ENCODE measurements at regions of chr7 and their contacts with region 1.

Region 1: DNA sequence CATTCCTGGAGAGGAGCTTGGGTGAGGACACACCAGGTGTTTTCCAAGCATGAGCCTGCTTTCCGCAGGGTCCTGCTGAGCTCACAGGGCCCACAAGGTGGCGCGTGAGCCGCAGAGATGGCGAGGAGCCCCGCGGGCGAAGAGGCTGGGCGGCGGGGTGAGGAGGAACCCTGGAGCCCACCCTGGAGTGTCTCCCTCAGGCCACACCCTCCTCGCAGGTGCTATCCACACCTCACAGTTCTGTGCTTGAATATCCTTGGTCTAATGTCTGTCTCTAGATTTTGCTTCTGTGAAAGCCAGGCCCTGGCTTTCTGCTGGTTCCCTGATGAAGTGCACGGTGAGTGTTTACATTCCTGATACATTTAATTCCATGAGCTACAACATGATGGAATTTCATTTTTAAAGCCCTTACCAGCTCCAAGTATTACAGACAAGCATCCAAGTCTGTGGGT is 433.6 kb downstream of the ACTR3B start:
- DNase-seq: peak in 1 of 2 donors; percentile 24
- ATAC-seq: peak in 3 of 8 donors; percentile 42 to 62 (median 58)
- H3K4me3 ChIP-seq: no peak overlapping the region
- H3K27ac ChIP-seq: no peak overlapping the region
- H3K4me1 ChIP-seq: no peaks in the 10 kb centered on the region
- H3K27me3 ChIP-seq: peaks cover 0 to 7% (median 0%) of the 10 kb centered on the region in 7 donors
- CTCF ChIP-seq: peak; percentile 22 to 64 (median 55)

Region 2: GRCh38 chr7:152894273-152895170 is 298.6 kb before region 1 on chr7:
- intact Hi-C with region 1: loop called in 1 of 10 experiments (anchors 5 kb)
- DNase-seq: no peak
- ATAC-seq: peak in 5 of 8 donors; percentile 35 to 73 (median 58)
- H3K4me3 ChIP-seq: no peak overlapping the region
- H3K27ac ChIP-seq: no peak overlapping the region
- H3K4me1 ChIP-seq: peaks cover 0 to 4% (median 0%) of the 10 kb centered on the region in 9 donors
- H3K27me3 ChIP-seq: peaks cover 0 to 24% (median 8%) of the 10 kb centered on the region in 7 donors
- CTCF ChIP-seq: peak; percentile 60 to 84 (median 77)

Measured in heart right ventricle (tissue), 16 donors.